ENCODE measurements at regions of chr3 and their contacts with region 1.

Region 1: GRCh38 chr3:183122257-183122932 is 23.1 kb upstream of the MCCC1 start:
- DNase-seq: no peak
- ATAC-seq: peak; percentile 68
- H3K4me3 ChIP-seq: no peak overlapping the region
- H3K27ac ChIP-seq: no peak overlapping the region
- H3K4me1 ChIP-seq: no peaks in the 10 kb centered on the region
- H3K27me3 ChIP-seq: no peaks in the 10 kb centered on the region
- CTCF ChIP-seq: peak; percentile 61 to 75 (median 73)
- EP300 ChIP-seq: no peak
- POLR2A ChIP-seq: no peak
- RAD21 ChIP-seq: peak; percentile 93

Region 2: GRCh38 chr3:183149901-183150750 is 27.7 kb after region 1 on chr3:
- CTCF ChIA-PET with region 1: interaction called, 8 read pairs
- POLR2A ChIA-PET with region 1: interaction called, 3 read pairs
- RAD21 ChIA-PET with region 1: interaction called, 5 read pairs
- SMC1A ChIA-PET with region 1: interaction called, 12 read pairs
- in situ Hi-C with region 1: no loop called
- intact Hi-C with region 1: no loop called
- DNase-seq: no peak
- ATAC-seq: no peak
- H3K4me3 ChIP-seq: no peak overlapping the region
- H3K27ac ChIP-seq: no peak overlapping the region
- H3K4me1 ChIP-seq: peaks cover under 1% of the 10 kb centered on the region; the same call in 1 of the 2 replicates
- H3K27me3 ChIP-seq: no peaks in the 10 kb centered on the region
- CTCF ChIP-seq: no peak
- EP300 ChIP-seq: no peak
- POLR2A ChIP-seq: 0 out of 2 replicates have a peak, but pooled peaks have one; percentile 31
- RAD21 ChIP-seq: no peak

Region 3: GRCh38 chr3:183178629-183179549 is 56.5 kb after region 1 on chr3:
- CTCF ChIA-PET with region 1: interaction called, 140 read pairs
- POLR2A ChIA-PET with region 1: no interaction called
- RAD21 ChIA-PET with region 1: interaction called, 89 read pairs
- SMC1A ChIA-PET with region 1: interaction called, 71 read pairs
- in situ Hi-C with region 1: no loop called
- intact Hi-C with region 1: loop called (anchors 1 kb)
- DNase-seq: no peak
- ATAC-seq: peak; percentile 87
- H3K4me3 ChIP-seq: peak overlapping the region; percentile 45
- H3K27ac ChIP-seq: no peak overlapping the region
- H3K4me1 ChIP-seq: peaks cover 6% of the 10 kb centered on the region; the same call in 1 of the 2 replicates
- H3K27me3 ChIP-seq: peaks cover 4 to 16% of the 10 kb centered on the region in 2 experiments
- CTCF ChIP-seq: peak; percentile 5 to 56 (median 27); a peak in 3 of 6 replicates
- EP300 ChIP-seq: no peak
- POLR2A ChIP-seq: no peak
- RAD21 ChIP-seq: peak; percentile 41; the same call in 1 of the 2 replicates

Region 4: GRCh38 chr3:183377307-183377959 is 255.0 kb after region 1 on chr3:
- CTCF ChIA-PET with region 1: interaction called, 229 read pairs
- POLR2A ChIA-PET with region 1: no interaction called
- RAD21 ChIA-PET with region 1: interaction called, 136 read pairs
- SMC1A ChIA-PET with region 1: interaction called, 187 read pairs
- in situ Hi-C with region 1: no loop called
- intact Hi-C with region 1: loop called (anchors 1 kb)
- DNase-seq: no peak
- ATAC-seq: peak; percentile 46
- H3K4me3 ChIP-seq: no peak overlapping the region
- H3K27ac ChIP-seq: no peak overlapping the region
- H3K4me1 ChIP-seq: peaks cover 11% of the 10 kb centered on the region; the same call in 1 of the 2 replicates
- H3K27me3 ChIP-seq: no peaks in the 10 kb centered on the region
- CTCF ChIP-seq: no peak
- EP300 ChIP-seq: no peak
- POLR2A ChIP-seq: no peak
- RAD21 ChIP-seq: no peak